Activated CD4-positive, alpha-beta T cell treated with anti-CD3 and anti-CD28 coated beads, Interleukin-2, amount 10 ng/mL, durations not matched to agents 24 days and 14 days (primary cell): ENCODE measurements at regions of chr12 and their contacts with region 1.

Region 1: DNA sequence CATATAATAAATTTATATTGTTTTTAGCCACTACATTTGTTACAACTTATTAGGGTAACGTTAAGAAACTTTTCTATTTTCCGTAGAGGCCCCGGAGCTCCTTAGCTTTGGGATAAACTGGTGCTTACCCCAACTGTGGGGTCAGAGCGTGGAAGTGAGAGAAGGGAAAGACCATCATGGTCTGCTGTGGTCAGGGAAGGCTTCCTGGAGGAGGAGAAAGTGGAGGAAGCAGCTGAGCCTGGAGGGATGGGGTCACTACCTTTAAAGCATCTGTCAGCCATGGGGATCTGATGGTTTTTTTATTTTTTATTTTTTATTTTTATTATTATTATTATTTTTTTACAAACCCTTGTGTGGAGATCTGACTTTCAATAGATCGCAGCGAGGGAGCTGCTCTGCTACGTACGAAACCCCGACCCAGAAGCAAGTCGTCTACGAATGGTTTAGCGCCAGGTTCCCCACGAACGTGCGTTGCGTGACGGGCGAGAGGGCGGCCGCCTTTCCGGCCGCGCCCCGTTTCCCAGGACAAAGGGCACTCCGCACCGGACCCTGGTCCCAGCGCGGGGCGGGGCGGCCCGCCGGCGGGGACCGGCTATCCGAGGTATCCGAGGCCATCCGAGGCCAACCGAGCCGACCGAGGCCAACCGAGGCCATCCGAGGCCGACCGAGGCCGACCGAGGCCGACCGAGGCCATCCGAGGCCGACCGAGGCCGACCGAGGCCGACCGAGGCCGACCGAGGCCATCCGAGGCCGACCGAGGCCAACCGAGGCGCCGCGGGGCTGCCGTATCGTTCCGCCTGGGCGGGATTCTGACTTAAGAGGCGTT is 1101.2 kb upstream of the TMEM132C start:
- DNase-seq: peak; percentile 95
- H3K4me3 Mint-ChIP-seq: peak overlapping the region; percentile 78
- H3K27ac Mint-ChIP-seq: no peak overlapping the region
- H3K4me1 Mint-ChIP-seq: peaks cover 18% of the 10 kb centered on the region
- H3K27me3 Mint-ChIP-seq: peaks cover 9% of the 10 kb centered on the region

Region 2: DNA sequence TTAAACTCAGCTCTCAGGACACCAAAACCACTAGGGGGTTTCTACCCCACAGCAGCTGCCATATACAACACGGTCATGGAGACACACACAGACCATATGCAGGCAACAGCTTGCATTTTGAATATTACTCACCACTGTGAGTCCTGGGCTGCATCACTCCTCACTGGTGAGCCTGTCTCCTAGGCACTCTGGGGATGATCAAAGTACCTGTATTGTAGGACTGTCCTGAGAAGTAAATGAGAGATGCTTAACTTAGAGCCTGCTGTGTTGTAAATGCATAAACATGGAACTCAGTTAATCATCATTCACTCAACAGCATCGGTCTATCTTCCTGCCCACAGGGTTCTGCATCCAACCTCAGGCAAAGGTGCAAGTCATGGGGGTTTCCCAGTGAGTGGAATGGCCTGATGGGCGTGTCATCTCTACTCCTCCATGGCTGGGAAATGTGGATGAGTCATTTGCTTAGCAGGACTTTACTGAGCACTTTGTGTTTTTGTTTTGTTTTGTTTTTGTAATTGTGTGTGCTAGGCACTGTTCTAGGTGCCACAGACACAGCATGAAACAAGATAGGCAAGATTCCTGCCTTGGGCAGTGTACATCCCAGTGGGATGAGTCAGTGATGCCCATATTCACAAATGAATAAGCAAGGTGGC is 40.0 kb before region 1 on chr12:
- intact Hi-C with region 1: loop called (anchors 1 kb)
- DNase-seq: peak; percentile 79
- H3K4me3 Mint-ChIP-seq: no peak overlapping the region
- H3K27ac Mint-ChIP-seq: peak overlapping the region; percentile 81
- H3K4me1 Mint-ChIP-seq: peaks cover 12% of the 10 kb centered on the region
- H3K27me3 Mint-ChIP-seq: no peaks in the 10 kb centered on the region